Activated CD4-positive, alpha-beta memory T cell treated with anti-CD3 and anti-CD28 coated beads for 36 hours (primary cell): ENCODE measurements at regions of chr17 and their contacts with region 1.

Region 1: GRCh38 chr17:27760069-27760885 is 40.1 kb downstream of the NOS2 start:
- DNase-seq: peak; percentile 80
- H3K4me3 Mint-ChIP-seq: no peak overlapping the region
- H3K27ac Mint-ChIP-seq: no peak overlapping the region
- H3K4me1 Mint-ChIP-seq: no peaks in the 10 kb centered on the region
- H3K27me3 Mint-ChIP-seq: no peaks in the 10 kb centered on the region

Region 2: DNA sequence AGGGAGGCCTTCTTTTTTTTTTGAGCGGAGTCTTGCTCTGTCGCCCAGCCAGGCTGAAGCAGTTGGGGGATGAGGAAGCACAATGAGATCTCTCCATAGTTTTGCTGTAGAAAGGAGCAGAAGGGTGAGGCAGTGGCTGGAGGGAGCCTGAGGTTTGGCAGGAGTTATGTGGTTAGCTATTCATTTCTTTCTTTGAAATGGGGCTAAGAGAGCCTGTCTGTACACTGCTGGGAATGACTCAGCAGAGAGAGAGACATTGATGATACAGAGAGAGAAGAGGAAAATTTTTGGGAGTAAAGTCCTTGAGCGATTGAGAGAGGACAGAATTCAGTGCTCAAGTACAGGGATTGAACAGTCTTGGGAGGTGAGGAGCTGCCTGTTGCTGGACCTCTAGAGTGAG is 17.9 kb after region 1 on chr17:
- CTCF ChIA-PET with region 1: interaction called, 10 read pairs
- POLR2A ChIA-PET with region 1: no interaction called
- intact Hi-C with region 1: no loop called
- DNase-seq: no peak
- H3K4me3 Mint-ChIP-seq: no peak overlapping the region
- H3K27ac Mint-ChIP-seq: no peak overlapping the region
- H3K4me1 Mint-ChIP-seq: no peaks in the 10 kb centered on the region
- H3K27me3 Mint-ChIP-seq: no peaks in the 10 kb centered on the region

Region 3: GRCh38 chr17:27879987-27880608 is 119.8 kb after region 1 on chr17:
- CTCF ChIA-PET with region 1: interaction called, 156 read pairs
- POLR2A ChIA-PET with region 1: no interaction called
- intact Hi-C with region 1: loop called (anchors 1 kb)
- DNase-seq: peak; percentile 84
- H3K4me3 Mint-ChIP-seq: no peak overlapping the region
- H3K27ac Mint-ChIP-seq: no peak overlapping the region
- H3K4me1 Mint-ChIP-seq: peaks cover 16% of the 10 kb centered on the region
- H3K27me3 Mint-ChIP-seq: no peaks in the 10 kb centered on the region

Region 4: DNA sequence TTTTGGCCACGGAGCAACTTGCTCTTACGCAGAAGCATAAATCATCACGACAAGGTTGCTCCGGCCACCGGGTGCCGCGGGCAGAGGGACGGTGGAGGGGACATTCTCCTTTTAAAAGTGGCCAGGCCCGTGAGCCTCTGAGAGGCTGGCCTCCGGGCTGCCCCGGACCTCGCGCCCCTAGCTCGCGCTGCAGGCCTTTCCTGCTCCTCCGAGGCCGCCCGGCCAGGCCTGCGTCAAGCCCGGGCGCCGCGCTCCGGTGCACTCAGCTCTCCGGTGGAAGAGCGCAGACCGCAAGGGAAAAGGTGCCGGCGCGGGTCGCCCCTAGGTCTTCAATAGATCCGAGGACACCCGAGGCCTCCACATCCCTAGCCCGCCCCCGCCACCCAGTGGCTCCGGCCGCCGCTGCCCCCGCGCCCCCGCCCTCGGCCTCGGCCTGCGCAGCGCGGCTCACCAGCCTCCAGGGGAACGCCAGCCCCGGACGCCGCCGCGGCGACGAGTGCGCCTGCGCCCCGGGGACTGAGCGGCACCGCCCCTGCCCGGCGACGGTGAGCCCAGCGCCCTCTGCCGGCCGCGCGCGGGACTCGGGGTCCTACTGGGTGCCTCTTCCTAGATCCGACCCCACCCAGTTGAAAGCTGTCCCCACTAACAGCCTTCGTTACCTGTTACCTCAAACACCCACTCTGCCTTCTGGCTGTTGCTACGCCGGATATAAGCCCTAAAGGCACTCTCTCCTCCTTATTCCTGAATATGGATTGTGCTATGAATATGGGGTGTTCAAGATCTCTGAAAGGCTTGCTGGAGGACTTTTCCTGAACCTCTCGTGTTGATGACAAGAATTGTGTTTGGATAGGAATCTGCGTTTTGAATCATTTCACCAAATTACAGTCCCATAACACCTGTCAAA is 132.8 kb after region 1 on chr17 and contains the start of gene LYRM9:
- CTCF ChIA-PET with region 1: interaction called, 14 read pairs
- POLR2A ChIA-PET with region 1: no interaction called
- intact Hi-C with region 1: no loop called
- DNase-seq: peak; percentile 93
- H3K4me3 Mint-ChIP-seq: peak within 1 kb of the TSS; percentile 74
- H3K27ac Mint-ChIP-seq: peak within 1 kb of the TSS; percentile 36
- H3K4me1 Mint-ChIP-seq: peaks cover 12% of the 10 kb centered on the region
- H3K27me3 Mint-ChIP-seq: peaks cover 14% of the 10 kb centered on the region
- total RNA-seq, gene LYRM9: 5.7 to 6.8 TPM

Region 5: DNA sequence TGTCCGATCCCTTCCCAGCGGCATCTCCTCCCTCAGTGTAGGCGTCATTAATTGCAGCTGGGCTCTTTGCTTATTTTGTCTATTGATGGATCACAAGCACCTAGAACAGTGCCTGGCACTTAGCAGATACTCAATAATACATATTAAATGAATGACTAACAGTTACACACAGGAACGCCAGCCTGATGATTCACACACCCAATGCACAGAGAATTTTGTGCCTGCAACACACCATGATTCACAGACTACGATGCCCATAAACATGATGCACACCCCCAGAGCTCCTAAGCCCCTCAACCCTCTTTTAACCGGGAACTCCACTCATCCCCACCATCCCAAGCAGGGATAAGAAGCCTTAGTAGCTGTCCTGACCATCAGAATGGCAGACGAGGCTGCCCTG is 492.2 kb after region 1 on chr17:
- CTCF ChIA-PET with region 1: interaction called, 9 read pairs
- POLR2A ChIA-PET with region 1: no interaction called
- intact Hi-C with region 1: loop called (anchors 1 kb)
- DNase-seq: no peak
- H3K4me3 Mint-ChIP-seq: no peak overlapping the region
- H3K27ac Mint-ChIP-seq: no peak overlapping the region
- H3K4me1 Mint-ChIP-seq: peaks cover 8% of the 10 kb centered on the region
- H3K27me3 Mint-ChIP-seq: peaks cover 7% of the 10 kb centered on the region